Calu3 (cell line): ENCODE measurements at regions of chr21 and their contacts with region 1.

Region 1: GRCh38 chr21:38798481-38798882 is 7.2 kb upstream of the ETS2 start:
- DNase-seq: peak; percentile 91
- H3K4me3 Mint-ChIP-seq: peak overlapping the region; percentile 48
- H3K27ac Mint-ChIP-seq: peak overlapping the region; percentile 94
- H3K4me1 Mint-ChIP-seq: peaks cover 74% of the 10 kb centered on the region
- H3K27me3 Mint-ChIP-seq: no peaks in the 10 kb centered on the region
- CTCF ChIP-seq: no peak

Region 2: DNA sequence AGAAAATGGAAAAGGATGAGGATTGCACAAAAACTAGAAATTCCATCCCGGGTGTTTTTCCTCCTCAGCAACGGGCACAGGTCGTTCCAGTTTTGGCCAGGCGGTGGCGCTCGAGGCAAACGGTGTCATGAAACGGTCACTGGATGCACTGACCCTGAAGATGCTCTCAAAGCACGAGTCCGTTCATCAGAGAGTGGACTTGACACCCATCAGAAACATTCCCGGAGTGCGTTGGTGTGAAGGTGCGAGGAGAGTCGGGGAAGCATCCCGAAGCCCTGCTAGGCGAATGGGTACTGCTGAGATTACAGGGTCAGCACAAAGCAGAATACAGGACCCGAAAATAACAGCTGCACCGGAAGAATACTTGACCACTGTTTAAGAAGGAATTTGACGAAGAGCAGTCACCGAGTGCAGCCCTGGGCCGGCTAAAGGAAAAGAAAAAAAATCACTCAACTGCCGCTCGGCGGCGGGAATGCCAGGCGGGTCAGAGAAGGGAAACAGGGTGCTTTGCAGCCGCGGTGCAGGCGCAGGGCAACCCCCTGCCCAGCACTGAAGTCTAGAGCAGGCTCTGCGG is 64.4 kb before region 1 on chr21:
- CTCF ChIA-PET with region 1: interaction called, 4 read pairs
- intact Hi-C with region 1: loop called (anchors 2 kb)
- DNase-seq: peak; percentile 84
- H3K4me3 Mint-ChIP-seq: peak overlapping the region; percentile 60
- H3K27ac Mint-ChIP-seq: peak overlapping the region; percentile 72
- H3K4me1 Mint-ChIP-seq: peaks cover 18% of the 10 kb centered on the region
- H3K27me3 Mint-ChIP-seq: no peaks in the 10 kb centered on the region
- CTCF ChIP-seq: peak; percentile 86

Region 3: DNA sequence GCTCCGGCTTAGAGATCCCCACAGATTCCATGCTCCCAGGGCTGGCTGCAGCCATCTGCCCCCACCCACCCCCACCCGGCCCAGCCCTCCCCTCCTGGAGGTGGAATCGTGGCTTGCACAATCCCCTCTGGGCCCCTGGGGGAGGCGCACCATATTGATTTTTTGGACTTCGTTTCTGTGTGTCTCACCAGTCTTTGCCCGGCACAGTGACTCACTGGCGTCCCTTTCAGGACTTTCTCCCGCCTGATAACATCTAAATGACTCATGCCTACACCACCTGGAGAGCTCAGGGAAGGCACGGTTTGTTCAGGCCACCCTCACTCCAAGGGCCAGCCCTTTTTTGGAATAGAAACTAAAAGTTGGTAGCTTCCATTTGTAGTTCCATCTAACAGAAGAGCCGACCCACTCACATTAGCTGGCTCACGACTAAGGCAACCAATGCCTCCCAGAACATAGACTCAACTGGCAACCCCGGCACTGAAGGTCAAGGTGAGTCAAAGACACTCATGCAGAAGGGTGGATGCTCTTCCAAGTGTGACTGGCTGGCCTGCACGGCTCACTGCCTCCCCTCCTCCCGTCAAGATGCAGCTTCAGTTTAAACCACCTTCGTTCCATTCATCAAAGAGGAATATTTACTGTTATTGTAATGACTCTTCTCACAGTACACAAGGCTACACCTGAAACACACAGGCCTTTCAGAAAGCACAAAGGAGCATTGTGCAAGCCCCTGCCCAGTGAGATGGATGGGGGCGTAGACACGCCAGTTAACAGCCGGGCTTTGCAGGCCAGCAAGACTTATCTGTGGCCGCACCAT is 10.8 kb before region 1 on chr21:
- CTCF ChIA-PET with region 1: interaction called, 28 read pairs
- intact Hi-C with region 1: no loop called
- DNase-seq: peak; percentile 89
- H3K4me3 Mint-ChIP-seq: peak overlapping the region; percentile 67
- H3K27ac Mint-ChIP-seq: peak overlapping the region; percentile 89
- H3K4me1 Mint-ChIP-seq: peaks cover 17% of the 10 kb centered on the region
- H3K27me3 Mint-ChIP-seq: no peaks in the 10 kb centered on the region
- CTCF ChIP-seq: no peak

Region 4: GRCh38 chr21:39125752-39126485 is 327.4 kb after region 1 on chr21:
- CTCF ChIA-PET with region 1: no interaction called
- intact Hi-C with region 1: loop called (anchors 5 kb)
- DNase-seq: peak; percentile 44
- H3K4me3 Mint-ChIP-seq: no peak overlapping the region
- H3K27ac Mint-ChIP-seq: no peak overlapping the region
- H3K4me1 Mint-ChIP-seq: no peaks in the 10 kb centered on the region
- H3K27me3 Mint-ChIP-seq: no peaks in the 10 kb centered on the region
- CTCF ChIP-seq: peak; percentile 24